CD4-positive, alpha-beta T cell (primary cell): ENCODE measurements at regions of chr1 and their contacts with region 1.

Region 1: GRCh38 chr1:32200226-32201010 is at the start of gene CCDC28B:
- DNase-seq: peak in 13 of 14 experiments; percentile 15 to 74 (median 46)
- ATAC-seq: peak; percentile 54
- H3K4me3 ChIP-seq: peak within 1 kb of the TSS; percentile 87
- H3K4me3 Mint-ChIP-seq: peak within 1 kb of the TSS; percentile 82
- H3K27ac ChIP-seq: peak within 1 kb of the TSS; percentile 81 to 97
- H3K27ac Mint-ChIP-seq: peak within 1 kb of the TSS; percentile 95
- H3K4me1 ChIP-seq: peaks cover 75% of the 10 kb centered on the region
- H3K4me1 Mint-ChIP-seq: peaks cover 64% of the 10 kb centered on the region
- H3K27me3 ChIP-seq: no peaks in the 10 kb centered on the region
- H3K27me3 Mint-ChIP-seq: no peaks in the 10 kb centered on the region
- CTCF ChIP-seq: no peak
- total RNA-seq, gene CCDC28B: 4.0 to 5.7 TPM

Region 2: DNA sequence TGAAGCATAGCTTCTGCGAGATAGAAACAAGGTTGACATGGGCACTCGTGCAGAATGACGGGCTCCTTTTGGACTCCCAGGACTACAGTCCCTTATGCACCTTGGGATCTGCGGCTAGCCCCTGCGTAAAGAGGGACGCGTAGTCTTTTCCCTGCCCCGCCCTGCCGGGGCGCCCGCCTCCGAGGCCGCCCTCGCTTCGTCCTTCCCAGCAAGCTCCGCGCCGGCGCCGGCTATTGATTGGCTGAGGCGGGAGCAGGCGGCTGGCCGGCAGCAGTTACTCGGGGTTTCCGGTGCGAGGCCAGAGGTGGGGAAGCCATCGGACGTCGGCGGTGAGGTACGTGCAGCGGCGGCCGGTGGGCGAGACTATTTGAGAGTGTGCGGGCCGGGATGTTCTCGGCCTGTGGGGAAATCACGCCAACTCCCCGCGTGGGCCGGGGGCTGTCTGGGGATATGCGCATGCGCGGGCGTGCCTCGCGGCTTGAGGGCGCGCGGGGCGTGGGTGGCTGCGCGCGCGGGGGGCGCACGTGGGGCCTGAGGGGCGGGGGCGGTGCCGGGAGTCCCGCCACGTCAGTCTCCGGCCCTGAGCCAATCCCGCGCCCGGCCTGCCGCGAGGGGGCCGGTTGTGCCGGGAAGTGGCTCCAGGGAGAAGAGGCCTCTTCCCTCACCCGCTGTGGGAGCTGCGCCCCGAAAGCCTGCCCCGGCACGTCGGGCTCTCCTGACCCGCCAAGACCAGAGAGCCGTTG is 20.8 kb before region 1 on chr1 and contains the start of gene TXLNA:
- CTCF ChIA-PET with region 1: interaction called, 3 read pairs
- POLR2A ChIA-PET with region 1: interaction called, 41 read pairs
- intact Hi-C with region 1: loop called in 1 of 2 experiments (anchors 2 kb)
- DNase-seq: peak; percentile 77 to 94 (median 84)
- ATAC-seq: peak; percentile 85
- H3K4me3 ChIP-seq: peak within 1 kb of the TSS; percentile 90
- H3K4me3 Mint-ChIP-seq: peak within 1 kb of the TSS; percentile 91
- H3K27ac ChIP-seq: peak within 1 kb of the TSS; percentile 77 to 93
- H3K27ac Mint-ChIP-seq: peak within 1 kb of the TSS; percentile 93
- H3K4me1 ChIP-seq: peaks cover 46% of the 10 kb centered on the region
- H3K4me1 Mint-ChIP-seq: peaks cover 49% of the 10 kb centered on the region
- H3K27me3 ChIP-seq: no peaks in the 10 kb centered on the region
- H3K27me3 Mint-ChIP-seq: no peaks in the 10 kb centered on the region
- CTCF ChIP-seq: no peak
- total RNA-seq, gene TXLNA: 6.3 to 6.4 TPM

Region 3: DNA sequence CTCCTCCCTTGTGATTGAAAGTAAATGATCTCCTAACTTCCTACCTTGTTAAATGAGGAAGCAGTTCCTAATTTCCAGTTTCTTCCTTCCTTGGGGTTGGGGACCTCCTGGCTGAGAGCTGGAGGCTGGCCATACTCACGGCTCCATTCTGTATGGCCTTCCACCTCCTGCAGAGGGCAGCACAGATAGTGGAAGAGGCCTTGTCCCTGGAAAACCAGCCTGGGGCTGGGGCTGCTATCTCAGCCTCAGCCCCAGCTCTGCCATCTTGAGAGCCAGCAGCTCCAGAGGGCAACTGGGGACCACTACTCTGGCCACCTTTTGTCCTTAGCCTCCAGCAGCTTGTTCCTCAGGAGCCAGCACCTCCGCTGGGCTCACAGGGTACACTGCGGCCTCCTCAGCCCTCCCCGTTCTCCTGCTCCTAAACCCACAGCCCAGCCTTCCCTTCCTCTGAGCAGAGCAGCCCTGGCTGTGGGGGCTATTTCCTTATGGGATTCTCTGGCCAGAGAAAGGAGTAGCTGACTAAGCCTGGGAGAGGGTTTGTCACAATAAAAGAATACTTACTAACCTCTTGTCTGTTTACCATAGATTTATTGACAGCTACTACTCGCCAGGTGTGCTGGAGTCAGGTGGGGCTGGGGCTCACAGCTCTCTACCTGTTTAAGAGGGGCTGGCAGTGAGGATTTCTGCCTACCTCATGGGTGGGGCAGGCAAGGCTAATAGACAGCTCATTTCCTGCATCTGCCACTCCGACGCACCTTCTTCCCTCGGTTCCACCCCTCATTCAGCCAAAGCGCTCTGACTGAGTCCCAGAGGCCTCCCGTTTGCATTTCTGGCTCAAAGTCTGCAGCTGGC is 15.4 kb after region 1 on chr1:
- CTCF ChIA-PET with region 1: interaction called, 12 read pairs
- POLR2A ChIA-PET with region 1: interaction called, 14 read pairs
- intact Hi-C with region 1: no loop called
- DNase-seq: peak; percentile 33 to 81 (median 50)
- ATAC-seq: peak; percentile 96
- H3K4me3 ChIP-seq: no peak overlapping the region
- H3K4me3 Mint-ChIP-seq: no peak overlapping the region
- H3K27ac ChIP-seq: no peak overlapping the region
- H3K27ac Mint-ChIP-seq: peak overlapping the region; percentile 62
- H3K4me1 ChIP-seq: peaks cover 16% of the 10 kb centered on the region
- H3K4me1 Mint-ChIP-seq: peaks cover 13% of the 10 kb centered on the region
- H3K27me3 ChIP-seq: no peaks in the 10 kb centered on the region
- H3K27me3 Mint-ChIP-seq: no peaks in the 10 kb centered on the region
- CTCF ChIP-seq: peak; percentile 85

Region 4: DNA sequence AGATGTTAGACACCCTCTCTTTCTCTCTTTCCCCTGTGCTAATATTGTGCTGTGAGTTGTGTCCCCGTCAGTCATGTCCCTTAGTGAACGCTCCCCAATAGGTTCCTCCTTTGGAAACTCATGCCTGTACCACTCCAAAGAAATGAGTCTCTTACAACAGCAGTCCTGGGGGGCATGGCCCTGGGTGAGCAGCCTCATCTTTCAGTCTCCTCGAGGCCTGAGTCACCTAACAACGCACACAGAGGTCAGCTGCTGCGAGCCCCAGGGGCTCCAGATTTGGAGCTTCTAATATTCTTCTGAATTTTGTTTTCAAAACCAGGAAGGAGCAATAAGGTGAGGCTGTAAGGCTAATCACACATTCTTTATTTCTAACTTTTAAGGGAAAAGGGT is 308.3 kb after region 1 on chr1:
- CTCF ChIA-PET with region 1: no interaction called
- POLR2A ChIA-PET with region 1: no interaction called
- intact Hi-C with region 1: no loop called
- DNase-seq: no peak
- ATAC-seq: no peak
- H3K4me3 ChIP-seq: no peak overlapping the region
- H3K4me3 Mint-ChIP-seq: no peak overlapping the region
- H3K27ac ChIP-seq: no peak overlapping the region
- H3K27ac Mint-ChIP-seq: no peak overlapping the region
- H3K4me1 ChIP-seq: no peaks in the 10 kb centered on the region
- H3K4me1 Mint-ChIP-seq: no peaks in the 10 kb centered on the region
- H3K27me3 ChIP-seq: no peaks in the 10 kb centered on the region
- H3K27me3 Mint-ChIP-seq: peaks cover 28% of the 10 kb centered on the region
- CTCF ChIP-seq: no peak